HepG2 (cell line): ENCODE measurements at regions of chr11 and their contacts with region 1.

Region 1: DNA sequence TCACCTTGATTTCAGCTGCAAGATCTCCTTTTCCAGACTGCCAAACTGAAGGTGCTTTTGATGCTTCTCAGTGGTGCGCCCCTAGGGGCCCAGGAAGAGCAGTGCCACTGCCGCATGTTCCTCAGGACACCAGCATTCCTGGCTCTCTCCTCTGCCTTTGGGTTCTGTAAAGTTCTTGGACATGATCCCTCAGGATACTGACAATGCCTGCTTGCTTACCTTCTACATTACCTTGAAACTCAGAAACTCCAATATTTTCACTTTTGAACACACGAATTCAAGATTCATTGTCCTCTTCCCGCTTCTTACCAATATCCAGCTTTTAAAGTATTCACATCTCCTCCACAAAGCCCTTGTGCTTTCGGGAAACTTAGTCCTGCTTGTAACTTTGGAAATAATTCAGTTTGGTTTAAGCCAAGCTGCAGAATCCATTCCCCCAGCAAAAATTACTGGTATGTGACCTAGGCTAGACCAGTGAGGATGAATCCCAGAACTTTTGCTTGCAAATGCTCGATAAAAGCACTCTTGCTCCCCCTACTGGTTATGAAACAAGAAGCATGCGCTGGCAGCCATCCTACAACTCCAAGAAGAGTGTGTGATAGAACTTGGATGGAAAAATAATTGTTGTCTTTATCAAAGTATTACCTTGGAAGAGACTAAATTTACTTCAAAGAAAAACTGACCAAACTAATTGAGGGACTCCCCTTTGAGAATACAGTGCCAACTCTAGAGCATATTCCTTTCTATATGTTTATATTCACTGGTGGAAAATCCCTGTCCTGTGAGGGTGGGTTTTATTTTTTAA is 16.5 kb upstream of the OR5B21 start:
- DNase-seq: peak; percentile 68
- ATAC-seq: peak; percentile 99
- H3K4me3 ChIP-seq: no peak overlapping the region; a peak in 1 of 6 replicates
- H3K27ac ChIP-seq: no peak overlapping the region
- H3K4me1 ChIP-seq: peaks cover 6% of the 10 kb centered on the region
- H3K27me3 ChIP-seq: 0 out of 5 replicates have a peak, but pooled peaks cover 0 to 4% of the 10 kb centered on the region in 2 experiments
- CTCF ChIP-seq: peak; percentile 70
- EP300 ChIP-seq: no peak
- POLR2A ChIP-seq: no peak
- RAD21 ChIP-seq: no peak

Region 2: DNA sequence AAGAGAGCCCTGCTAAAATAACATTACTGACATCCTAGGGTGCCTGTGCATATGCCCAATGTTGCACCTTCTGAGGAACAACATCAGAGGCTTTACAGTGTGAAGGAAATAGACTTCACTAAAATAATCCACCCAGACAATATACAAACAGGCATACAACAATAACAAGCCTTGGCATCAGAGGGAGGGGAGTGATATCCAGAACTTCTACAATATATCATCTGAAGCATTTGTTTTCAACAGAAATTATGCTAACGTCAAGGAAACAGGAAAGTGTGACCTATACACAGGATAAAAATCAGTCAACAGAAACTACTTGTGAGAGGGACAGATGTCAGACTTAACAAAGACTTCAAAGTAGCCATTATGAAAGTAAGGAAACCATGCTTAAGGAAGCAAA is 681.6 kb before region 1 on chr11:
- CTCF ChIA-PET with region 1: no interaction called
- POLR2A ChIA-PET with region 1: no interaction called
- in situ Hi-C with region 1: loop called (anchors 25 kb)
- intact Hi-C with region 1: no loop called
- DNase-seq: no peak
- ATAC-seq: no peak
- H3K4me3 ChIP-seq: no peak overlapping the region
- H3K27ac ChIP-seq: no peak overlapping the region
- H3K4me1 ChIP-seq: no peaks in the 10 kb centered on the region
- H3K27me3 ChIP-seq: peaks cover 0 to under 1% of the 10 kb centered on the region in 2 experiments; a peak in 1 of 5 replicates
- CTCF ChIP-seq: no peak
- EP300 ChIP-seq: no peak
- POLR2A ChIP-seq: no peak
- RAD21 ChIP-seq: no peak

Region 3: DNA sequence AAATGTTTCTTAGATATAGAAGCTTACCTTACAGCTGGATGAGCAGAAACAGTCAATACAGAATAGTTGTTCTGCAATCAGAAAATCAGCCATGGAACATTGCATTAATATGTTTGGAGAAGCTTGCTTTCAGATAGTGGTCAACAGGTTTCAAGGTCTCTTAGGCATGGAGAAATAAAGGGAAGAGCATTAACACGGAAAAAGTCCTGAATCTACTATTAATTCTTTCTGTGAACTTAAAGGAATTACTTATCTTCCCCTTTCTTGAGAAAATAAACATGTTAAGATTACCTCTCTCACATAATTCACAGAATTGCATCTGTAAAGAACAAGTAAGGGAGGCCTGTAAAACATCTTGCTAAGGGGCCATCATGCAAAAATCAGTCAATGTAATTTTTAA is 117.7 kb before region 1 on chr11 and contains the start of gene OR5B3:
- CTCF ChIA-PET with region 1: no interaction called
- POLR2A ChIA-PET with region 1: no interaction called
- in situ Hi-C with region 1: loop called (anchors 25 kb)
- intact Hi-C with region 1: no loop called
- DNase-seq: no peak
- ATAC-seq: no peak
- H3K4me3 ChIP-seq: no peak within 1 kb of the TSS
- H3K27ac ChIP-seq: no peak within 1 kb of the TSS
- H3K4me1 ChIP-seq: no peaks in the 10 kb centered on the region
- H3K27me3 ChIP-seq: no peaks in the 10 kb centered on the region; a peak in 1 of 5 replicates
- CTCF ChIP-seq: no peak
- EP300 ChIP-seq: no peak
- POLR2A ChIP-seq: no peak
- RAD21 ChIP-seq: no peak
- total RNA-seq, gene OR5B3: not detected in 2 replicates

Region 4: DNA sequence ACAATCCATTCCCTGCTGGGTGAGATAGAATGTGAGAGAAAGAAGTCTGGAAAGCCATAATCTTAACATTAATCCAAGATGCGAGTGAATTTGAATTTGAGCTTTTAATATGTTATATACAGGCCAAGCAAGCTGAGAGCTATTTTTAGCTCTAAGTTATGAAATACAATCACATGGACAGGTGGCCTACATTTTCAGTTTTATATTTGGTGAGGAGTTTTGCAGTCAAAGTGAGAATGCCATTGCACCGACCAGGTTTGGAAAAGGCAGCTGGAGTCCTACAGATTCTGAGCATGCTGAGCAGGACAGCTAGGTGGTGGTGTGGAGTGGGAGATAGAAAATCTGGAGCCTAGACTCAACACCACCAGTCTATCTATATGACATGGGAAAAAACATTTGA is 28.5 kb before region 1 on chr11:
- CTCF ChIA-PET with region 1: no interaction called
- POLR2A ChIA-PET with region 1: no interaction called
- in situ Hi-C with region 1: no loop called
- intact Hi-C with region 1: no loop called
- DNase-seq: no peak
- ATAC-seq: no peak
- H3K4me3 ChIP-seq: no peak overlapping the region
- H3K27ac ChIP-seq: no peak overlapping the region
- H3K4me1 ChIP-seq: no peaks in the 10 kb centered on the region
- H3K27me3 ChIP-seq: peaks cover 0 to 7% of the 10 kb centered on the region in 2 experiments; a peak in 2 of 5 replicates
- CTCF ChIP-seq: no peak
- EP300 ChIP-seq: no peak
- POLR2A ChIP-seq: no peak
- RAD21 ChIP-seq: no peak

Region 5: DNA sequence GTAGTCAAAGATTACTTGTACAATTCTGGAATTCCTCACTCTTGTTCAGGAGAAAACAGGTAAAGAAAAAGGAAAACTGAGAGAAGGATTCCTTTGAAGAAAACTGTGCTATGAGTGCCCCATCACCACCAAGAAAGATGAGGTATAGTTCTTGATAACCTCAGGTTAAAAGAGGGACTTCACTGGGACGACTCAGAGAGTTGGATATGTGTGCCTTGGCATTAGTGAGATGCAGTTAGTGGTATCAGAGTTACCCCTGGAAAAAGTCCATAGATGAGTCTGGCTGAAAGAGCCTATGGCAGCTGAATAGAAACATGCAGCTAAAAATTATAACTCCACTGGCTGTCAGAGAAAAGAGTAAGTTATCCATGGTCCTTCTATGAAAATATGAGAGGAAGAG is 22.4 kb after region 1 on chr11:
- CTCF ChIA-PET with region 1: no interaction called
- POLR2A ChIA-PET with region 1: no interaction called
- in situ Hi-C with region 1: no loop called
- intact Hi-C with region 1: no loop called
- DNase-seq: no peak
- ATAC-seq: no peak
- H3K4me3 ChIP-seq: no peak overlapping the region
- H3K27ac ChIP-seq: no peak overlapping the region
- H3K4me1 ChIP-seq: no peaks in the 10 kb centered on the region
- H3K27me3 ChIP-seq: no peaks in the 10 kb centered on the region
- CTCF ChIP-seq: no peak
- EP300 ChIP-seq: no peak
- POLR2A ChIP-seq: no peak
- RAD21 ChIP-seq: no peak